Body of pancreas (tissue), 4 donors: ENCODE measurements at regions of chr9 and their contacts with region 1.

Region 1: DNA sequence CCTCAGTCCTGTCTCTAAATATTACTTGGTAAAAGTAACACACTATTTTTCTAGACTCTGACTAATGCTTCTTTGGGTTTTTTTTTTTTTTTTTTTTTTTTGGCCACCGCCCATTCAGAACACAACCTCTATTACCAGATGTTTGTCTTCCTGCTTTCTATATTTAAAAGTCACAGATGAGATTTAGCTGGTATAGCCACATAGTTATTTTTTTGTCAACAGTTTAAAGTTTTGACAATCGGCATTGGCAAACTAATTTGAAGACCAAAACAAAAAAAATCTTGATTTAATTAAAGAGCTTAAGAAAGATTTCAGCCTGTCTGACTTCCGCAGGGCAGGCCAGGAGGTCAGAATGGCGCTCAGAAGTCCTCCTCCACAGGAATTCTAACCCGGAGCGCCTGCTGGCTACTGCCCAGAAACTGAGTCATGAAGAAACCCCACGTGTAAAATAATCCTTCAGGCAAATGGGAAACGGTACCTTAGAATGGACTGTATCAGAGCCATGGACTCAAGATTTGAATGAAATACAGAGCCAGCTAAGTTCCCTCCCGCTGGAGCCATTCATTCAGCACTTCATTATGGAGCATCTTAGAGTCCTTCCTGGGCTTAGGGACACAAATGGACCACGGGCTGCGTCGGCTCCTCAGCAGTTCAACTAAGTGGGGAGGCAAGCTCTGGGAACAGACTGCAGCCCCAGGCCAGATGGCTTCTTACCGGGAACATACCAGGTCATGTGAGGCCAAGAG is 55.6 kb downstream of the PTPDC1 start:
- DNase-seq: peak; percentile 44 to 81 (median 62)
- ATAC-seq: peak; percentile 59
- H3K4me3 ChIP-seq: no peak overlapping the region
- H3K27ac ChIP-seq: peak overlapping the region in 3 of 4 donors; percentile 40 to 49 (median 45)
- H3K4me1 ChIP-seq: peaks cover 10% of the 10 kb centered on the region
- H3K27me3 ChIP-seq: no peaks in the 10 kb centered on the region
- CTCF ChIP-seq: no peak
- POLR2A ChIP-seq: no peak

Region 2: DNA sequence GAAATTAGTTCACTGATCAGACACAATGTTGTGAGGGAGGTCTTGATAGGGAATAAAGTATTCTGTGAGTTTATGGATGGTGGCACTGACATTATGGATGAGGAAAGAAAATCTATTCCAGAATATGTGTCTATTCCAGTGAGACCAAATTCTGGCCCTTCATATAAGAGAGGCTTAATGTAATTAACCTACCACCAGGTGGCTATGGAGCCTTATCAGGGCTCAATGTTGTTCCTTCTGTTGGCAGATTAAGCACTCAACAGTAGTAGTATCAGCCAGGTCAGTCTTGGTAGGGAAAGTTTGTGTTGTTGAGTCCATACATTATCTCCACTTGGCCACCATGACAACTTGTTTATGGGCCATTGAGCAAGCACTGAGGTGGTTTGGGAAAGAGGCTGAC is 143.0 kb before region 1 on chr9:
- intact Hi-C with region 1: no loop called
- DNase-seq: no peak
- ATAC-seq: no peak
- H3K4me3 ChIP-seq: no peak overlapping the region
- H3K27ac ChIP-seq: no peak overlapping the region
- H3K4me1 ChIP-seq: peaks cover 7% of the 10 kb centered on the region
- H3K27me3 ChIP-seq: no peaks in the 10 kb centered on the region
- CTCF ChIP-seq: no peak
- POLR2A ChIP-seq: no peak

Region 3: DNA sequence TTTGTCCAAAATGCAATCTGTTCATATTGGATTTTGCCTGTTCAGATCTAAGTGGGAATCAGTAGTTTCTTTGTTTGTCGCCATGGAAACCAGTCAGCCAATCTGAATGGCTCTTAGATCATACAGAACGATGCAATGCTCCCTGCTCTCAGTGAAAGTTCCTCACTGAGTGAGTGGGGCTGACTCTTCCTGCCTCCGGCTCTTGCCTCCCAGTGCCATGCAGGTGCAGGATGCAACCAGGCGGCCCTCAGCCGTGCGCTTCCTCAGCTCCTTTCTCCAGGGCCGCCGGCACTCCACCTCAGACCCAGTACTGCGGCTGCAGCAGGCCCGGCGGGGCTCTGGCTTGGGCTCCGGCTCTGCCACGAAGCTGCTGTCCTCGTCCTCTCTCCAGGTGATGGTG is 55.5 kb before region 1 on chr9 and contains the start of gene PTPDC1:
- intact Hi-C with region 1: no loop called
- DNase-seq: no peak
- ATAC-seq: no peak
- H3K4me3 ChIP-seq: no peak within 1 kb of the TSS
- H3K27ac ChIP-seq: no peak within 1 kb of the TSS
- H3K4me1 ChIP-seq: no peaks in the 10 kb centered on the region
- H3K27me3 ChIP-seq: no peaks in the 10 kb centered on the region
- CTCF ChIP-seq: no peak
- POLR2A ChIP-seq: no peak
- total RNA-seq, gene PTPDC1: 11.7 to 12.2 TPM

Region 4: DNA sequence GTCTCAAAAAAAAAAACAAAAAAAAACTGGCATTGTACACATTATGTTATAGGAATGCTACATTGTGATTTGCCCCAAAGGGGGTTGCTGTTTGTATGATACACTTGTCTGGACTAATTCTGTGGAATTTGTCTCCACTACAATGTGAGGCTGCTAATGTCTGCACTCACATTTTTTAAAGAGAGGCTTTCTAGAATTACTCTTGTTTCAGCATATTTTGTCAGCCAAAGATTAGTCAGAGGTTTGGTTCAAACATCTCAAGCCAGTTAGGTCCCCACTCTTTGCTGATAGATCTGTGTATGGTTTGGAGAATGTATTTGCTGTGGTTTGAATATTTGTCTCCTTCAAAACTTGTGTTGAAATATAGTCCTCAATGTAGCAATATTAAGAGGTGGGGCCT is 59.9 kb after region 1 on chr9:
- intact Hi-C with region 1: loop called (anchors 10 kb)
- DNase-seq: no peak
- ATAC-seq: no peak
- H3K4me3 ChIP-seq: no peak overlapping the region
- H3K27ac ChIP-seq: no peak overlapping the region
- H3K4me1 ChIP-seq: no peaks in the 10 kb centered on the region
- H3K27me3 ChIP-seq: no peaks in the 10 kb centered on the region
- CTCF ChIP-seq: no peak
- POLR2A ChIP-seq: no peak